ENCODE measurements at regions of chr18 and their contacts with region 1.

Region 1: DNA sequence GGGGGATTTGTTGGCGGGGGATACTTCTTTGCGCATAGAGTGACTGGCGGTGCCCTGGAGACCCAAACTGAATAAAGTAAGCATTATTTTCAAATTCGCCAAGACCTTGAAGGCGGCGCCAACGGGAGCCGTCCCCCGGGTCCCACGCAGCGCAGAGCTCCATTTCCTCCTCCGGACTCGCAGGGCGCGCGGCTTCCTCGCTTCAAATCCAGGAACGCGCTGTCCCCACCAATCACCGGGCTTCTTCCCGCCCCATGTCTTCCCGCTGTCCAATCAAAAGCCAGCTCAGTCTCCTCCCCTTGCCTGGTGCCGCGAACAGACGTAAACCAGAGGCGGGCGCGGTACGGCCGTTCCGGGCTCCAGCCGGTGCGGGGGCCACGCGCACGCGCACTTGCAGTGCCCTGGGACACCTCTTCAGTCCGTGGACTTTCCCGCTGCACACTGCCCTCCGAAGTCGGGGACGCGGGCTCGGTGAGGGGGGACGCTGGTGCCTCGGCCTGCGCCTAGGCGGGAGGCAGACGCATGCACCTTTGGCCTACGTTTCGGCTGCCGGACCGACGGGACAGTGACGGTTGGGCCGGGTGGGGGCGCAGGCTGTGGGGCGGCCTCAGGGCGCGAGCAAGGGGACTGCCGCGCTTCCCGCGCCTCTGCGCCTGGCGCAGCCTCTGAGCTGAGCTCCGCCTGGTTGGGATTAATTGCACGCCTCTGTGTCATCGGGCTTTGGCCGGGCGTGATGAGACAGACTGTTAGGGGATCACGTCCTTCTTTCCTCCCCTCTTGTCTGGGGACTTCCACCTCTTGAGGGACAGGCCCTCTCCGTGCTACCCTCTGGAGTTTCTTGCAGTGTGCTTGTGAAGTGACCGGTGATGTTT is at the start of gene CEP192:
- DNase-seq: peak; percentile 97 to 99 (median 98)
- ATAC-seq: peak; percentile 92
- H3K4me3 ChIP-seq: peak within 1 kb of the TSS; percentile 68
- H3K27ac ChIP-seq: peak within 1 kb of the TSS; percentile 93
- H3K4me1 ChIP-seq: peaks cover 26 to 28% of the 10 kb centered on the region in 2 experiments; a peak in 4 of 5 replicates
- H3K27me3 ChIP-seq: no peaks in the 10 kb centered on the region
- CTCF ChIP-seq: peak in 1 of 3 experiments; percentile 20; a peak in 1 of 6 replicates
- EP300 ChIP-seq: no peak
- POLR2A ChIP-seq: peak; percentile 97
- RAD21 ChIP-seq: no peak
- polyA plus RNA-seq, gene CEP192: 14.4 to 30.5 TPM

Region 2: GRCh38 chr18:12883684-12884405 is 107.4 kb before region 1 on chr18 and contains the start of gene PTPN2:
- CTCF ChIA-PET with region 1: no interaction called
- POLR2A ChIA-PET with region 1: interaction called, 3 read pairs
- in situ Hi-C with region 1: no loop called
- intact Hi-C with region 1: loop called (anchors 10 kb)
- DNase-seq: peak; percentile 91 to 96 (median 92)
- ATAC-seq: peak; percentile 85
- H3K4me3 ChIP-seq: peak within 1 kb of the TSS; percentile 84
- H3K27ac ChIP-seq: peak within 1 kb of the TSS; percentile 98
- H3K4me1 ChIP-seq: peaks cover 32 to 45% of the 10 kb centered on the region in 2 experiments
- H3K27me3 ChIP-seq: no peaks in the 10 kb centered on the region
- CTCF ChIP-seq: no peak; a peak in 1 of 6 replicates
- EP300 ChIP-seq: no peak
- POLR2A ChIP-seq: peak; percentile 99
- RAD21 ChIP-seq: peak in 1 of 2 experiments; percentile 20; a peak in 2 of 4 replicates
- polyA plus RNA-seq, gene PTPN2: 36.6 to 46.3 TPM

Region 3: DNA sequence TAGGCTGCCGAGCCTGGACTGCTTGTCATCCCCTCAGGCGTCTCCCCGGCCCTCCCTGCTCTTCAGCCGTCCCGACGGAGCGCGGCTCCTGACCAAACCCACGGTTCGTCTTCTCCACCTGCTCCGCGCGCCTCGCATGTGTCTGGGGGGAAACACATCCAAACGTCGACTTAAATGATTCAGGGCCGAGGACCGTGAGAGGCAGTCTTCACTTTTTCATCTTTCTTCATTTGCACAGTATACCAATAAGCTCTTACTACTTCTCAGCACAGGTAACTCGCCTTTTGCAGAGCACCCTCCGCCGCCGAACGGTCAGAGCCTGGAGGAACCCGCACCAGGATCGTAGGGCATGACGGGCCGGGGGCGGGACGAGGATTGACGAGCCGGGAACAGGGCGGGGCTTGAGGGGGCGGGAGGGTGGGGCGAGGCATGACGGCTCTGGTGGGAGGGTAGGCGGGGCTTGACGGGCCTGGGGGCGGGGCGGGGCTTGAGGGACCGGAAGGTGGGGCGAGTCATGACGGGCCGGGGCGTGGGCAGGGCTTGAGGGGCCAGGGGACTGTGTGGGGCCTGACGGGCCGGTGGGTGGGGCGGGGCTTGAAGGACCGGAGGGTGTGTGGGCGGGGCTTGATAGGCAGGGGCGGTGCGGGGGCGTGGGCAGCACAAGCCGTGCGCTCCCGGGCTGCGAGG is 43.7 kb before region 1 on chr18 and contains the start of gene SEH1L:
- CTCF ChIA-PET with region 1: no interaction called
- POLR2A ChIA-PET with region 1: interaction called, 8 read pairs
- in situ Hi-C with region 1: no loop called
- intact Hi-C with region 1: loop called (anchors 2 kb)
- DNase-seq: peak; percentile 97 to 99 (median 99)
- ATAC-seq: peak; percentile 91
- H3K4me3 ChIP-seq: peak within 1 kb of the TSS; percentile 85
- H3K27ac ChIP-seq: peak within 1 kb of the TSS; percentile 98
- H3K4me1 ChIP-seq: peaks cover 19 to 31% of the 10 kb centered on the region in 2 experiments; a peak in 4 of 5 replicates
- H3K27me3 ChIP-seq: no peaks in the 10 kb centered on the region
- CTCF ChIP-seq: no peak
- EP300 ChIP-seq: no peak
- POLR2A ChIP-seq: peak; percentile 88
- RAD21 ChIP-seq: no peak
- polyA plus RNA-seq, gene SEH1L: 83.6 to 108 TPM

Region 4: DNA sequence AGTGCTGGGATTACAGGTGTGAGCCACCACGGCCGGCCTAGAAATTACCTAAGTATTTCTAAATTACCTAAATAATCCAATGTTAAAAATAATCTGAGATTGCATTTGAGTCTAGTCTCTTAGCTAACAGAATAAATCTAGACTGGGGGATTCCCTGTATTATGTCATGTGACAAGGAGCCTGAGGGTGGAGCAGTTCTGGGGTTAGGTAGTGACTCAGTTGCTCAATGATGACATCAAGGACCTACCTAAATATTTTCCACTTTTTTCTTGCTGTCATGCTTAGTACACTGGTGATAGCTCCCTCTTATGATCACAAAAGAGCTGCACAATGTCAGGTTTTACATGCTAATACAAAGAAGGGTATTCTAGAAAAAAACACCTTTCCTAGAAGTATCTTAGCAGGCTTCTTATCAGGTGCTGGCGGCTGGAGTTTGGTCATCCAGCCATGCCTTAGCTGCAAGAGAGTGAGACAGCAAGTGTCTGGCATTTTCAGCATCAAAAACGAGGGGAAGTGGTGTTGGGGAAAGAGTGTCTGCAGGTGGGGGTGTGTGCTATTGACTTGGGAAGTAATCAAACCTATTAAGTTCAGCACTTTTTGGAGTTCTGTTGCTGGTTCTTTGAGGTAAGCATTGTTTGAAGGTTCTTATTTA is 17.5 kb before region 1 on chr18:
- CTCF ChIA-PET with region 1: no interaction called
- POLR2A ChIA-PET with region 1: interaction called, 16 read pairs
- in situ Hi-C with region 1: no loop called
- intact Hi-C with region 1: no loop called
- DNase-seq: peak in 1 of 4 experiments; percentile 31
- ATAC-seq: peak; percentile 33; the same call in 1 of the 3 replicates
- H3K4me3 ChIP-seq: no peak overlapping the region
- H3K27ac ChIP-seq: no peak overlapping the region
- H3K4me1 ChIP-seq: no peaks in the 10 kb centered on the region; a peak in 1 of 5 replicates
- H3K27me3 ChIP-seq: no peaks in the 10 kb centered on the region
- CTCF ChIP-seq: no peak
- EP300 ChIP-seq: no peak
- POLR2A ChIP-seq: no peak
- RAD21 ChIP-seq: no peak

Measured in K562 (cell line).